Activated CD4-positive, alpha-beta memory T cell treated with anti-CD3 and anti-CD28 coated beads for 36 hours (primary cell): ENCODE measurements at regions of chr1 and their contacts with region 1.

Region 1: DNA sequence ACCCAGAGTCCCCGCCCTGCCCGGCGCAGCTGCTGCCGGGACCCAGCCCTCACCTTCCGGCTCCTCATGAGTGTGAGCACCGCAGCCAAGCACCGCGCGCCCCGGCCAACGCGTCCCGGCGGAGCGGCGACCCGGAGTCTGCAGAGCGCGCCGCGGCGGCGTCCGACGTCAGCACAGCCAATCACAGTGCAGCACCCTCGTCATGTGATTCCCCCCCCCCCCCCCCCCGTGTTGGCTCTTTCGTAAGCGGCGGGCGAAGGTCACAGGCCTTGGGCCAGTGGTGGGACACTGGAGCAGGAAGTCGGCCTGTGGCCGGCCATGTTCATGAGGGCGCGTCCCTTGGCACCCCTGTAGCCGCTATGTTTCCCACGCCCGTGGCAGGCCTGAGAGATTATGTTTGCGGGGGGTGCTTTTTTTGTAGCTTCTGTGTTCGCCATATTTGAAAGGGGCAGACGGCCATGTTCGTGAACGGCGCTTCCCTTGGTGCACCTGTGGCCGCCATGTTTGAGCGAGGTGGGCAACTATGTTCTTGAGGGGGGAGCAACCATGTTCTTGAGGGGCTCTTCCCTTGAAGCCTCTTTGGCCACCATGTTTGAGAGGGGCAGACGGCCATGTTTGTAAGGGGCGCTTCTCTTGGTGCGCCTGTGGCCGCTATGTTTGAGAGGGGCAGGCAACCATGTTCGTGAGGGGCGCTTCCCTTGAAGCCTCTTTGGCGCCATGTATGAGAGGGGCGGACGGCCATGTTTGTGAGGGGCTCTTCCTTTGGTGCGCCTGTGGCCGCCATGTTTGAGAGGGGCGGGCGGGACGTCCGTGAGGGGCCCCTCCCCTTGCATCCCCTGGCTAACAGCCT is at the start of gene C1orf174:
- DNase-seq: peak; percentile 93
- H3K4me3 Mint-ChIP-seq: peak within 1 kb of the TSS; percentile 95
- H3K27ac Mint-ChIP-seq: peak within 1 kb of the TSS; percentile 95
- H3K4me1 Mint-ChIP-seq: peaks cover 47% of the 10 kb centered on the region
- H3K27me3 Mint-ChIP-seq: no peaks in the 10 kb centered on the region
- total RNA-seq, gene C1orf174: 32.8 to 33.5 TPM

Region 2: DNA sequence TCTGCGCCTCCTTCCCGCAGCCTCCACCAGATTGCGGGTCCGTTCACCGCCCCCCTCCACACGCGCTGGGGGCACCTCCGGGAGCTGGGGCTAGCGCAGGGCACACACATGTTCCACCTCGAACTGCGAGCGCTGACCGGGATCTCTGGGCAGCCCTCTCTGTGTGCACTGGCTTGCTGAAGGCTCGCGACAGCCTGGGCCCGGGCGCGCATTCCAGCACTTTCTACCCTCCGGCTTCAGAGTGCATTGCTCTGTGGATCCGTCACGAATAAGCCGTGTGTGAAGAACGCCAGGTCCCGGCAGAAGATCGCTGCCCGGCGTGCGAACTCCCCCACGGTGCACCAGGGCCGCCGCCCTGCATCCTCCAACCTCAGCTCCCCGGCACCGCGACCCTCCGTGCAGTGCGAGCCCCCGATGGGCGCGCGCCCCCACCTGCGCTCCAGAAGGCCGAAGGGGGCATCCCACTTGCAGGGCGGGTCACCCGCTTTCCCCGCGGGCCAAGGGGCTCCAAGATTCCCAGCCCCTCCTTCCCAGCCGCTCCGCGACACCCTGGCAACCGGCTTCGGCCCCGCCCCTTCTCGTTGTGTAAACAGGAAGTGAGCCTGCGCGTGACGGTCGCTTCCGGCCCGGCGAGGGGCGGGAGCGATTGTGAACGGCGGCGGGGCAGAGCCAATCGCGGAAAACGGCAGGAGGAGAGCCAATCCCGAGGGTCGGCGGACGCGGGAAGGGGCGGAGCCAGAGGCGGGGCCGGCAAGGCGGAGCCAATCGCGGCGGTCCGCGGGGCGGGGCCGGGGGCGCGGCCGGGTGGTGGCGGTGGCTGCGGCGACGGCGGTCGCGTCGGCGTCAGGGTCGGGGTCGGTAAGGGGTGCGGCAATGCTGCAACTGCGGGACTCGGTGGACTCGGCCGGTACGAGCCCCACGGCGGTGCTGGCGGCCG is 275.9 kb before region 1 on chr1 and contains the start of gene TPRG1L:
- CTCF ChIA-PET with region 1: no interaction called
- POLR2A ChIA-PET with region 1: no interaction called
- intact Hi-C with region 1: loop called (anchors 1 kb)
- DNase-seq: peak; percentile 98
- H3K4me3 Mint-ChIP-seq: peak within 1 kb of the TSS; percentile 86
- H3K27ac Mint-ChIP-seq: peak within 1 kb of the TSS; percentile 61
- H3K4me1 Mint-ChIP-seq: peaks cover 34% of the 10 kb centered on the region
- H3K27me3 Mint-ChIP-seq: no peaks in the 10 kb centered on the region
- total RNA-seq, gene TPRG1L: 9.2 to 10.4 TPM

Region 3: DNA sequence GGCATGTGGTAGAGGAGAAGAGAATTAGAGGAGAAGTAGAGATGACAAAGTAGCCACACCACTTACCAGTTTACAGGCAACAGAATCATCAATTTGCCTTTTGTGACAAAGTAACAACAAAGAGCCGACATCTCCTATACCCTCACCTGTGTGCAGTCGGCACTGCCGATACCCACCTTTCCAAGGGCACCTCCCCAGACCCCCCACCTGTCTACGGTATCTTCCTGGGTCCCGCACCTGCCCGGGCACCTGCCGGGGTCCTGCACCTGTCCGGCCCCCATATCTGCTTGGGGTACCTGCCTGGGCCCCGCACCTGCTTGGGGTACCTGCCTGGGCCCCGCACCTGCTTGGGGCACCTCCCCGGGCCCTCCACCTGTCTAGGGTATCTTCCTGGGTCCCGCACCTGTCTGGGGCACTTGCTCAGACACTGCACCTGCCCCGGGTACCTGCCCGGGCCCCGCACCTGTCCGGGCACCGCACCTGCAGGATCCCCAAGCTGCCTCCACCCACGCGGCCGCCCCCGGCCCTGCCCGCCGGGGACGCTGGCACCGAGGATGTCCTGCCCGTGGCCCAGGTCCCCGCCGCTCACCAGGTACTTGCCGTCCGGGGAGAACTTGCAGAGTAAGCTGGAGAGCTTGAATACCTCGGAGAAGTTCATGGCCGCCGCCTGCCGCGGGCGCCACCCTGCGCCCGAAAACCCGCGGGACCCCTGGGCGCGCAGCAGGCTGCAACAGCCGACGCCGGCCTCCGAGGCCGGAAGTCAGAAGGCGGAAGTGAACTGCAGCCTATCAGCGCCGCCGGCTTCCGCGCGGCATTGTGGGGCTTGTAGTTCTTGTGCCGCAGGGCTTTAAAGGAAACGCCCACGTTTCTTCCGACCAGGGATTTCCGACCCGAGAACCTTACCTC is 250.7 kb before region 1 on chr1 and contains the start of gene WRAP73:
- CTCF ChIA-PET with region 1: no interaction called
- POLR2A ChIA-PET with region 1: no interaction called
- intact Hi-C with region 1: loop called (anchors 10 kb)
- DNase-seq: peak; percentile 95
- H3K4me3 Mint-ChIP-seq: peak within 1 kb of the TSS; percentile 76
- H3K27ac Mint-ChIP-seq: no peak within 1 kb of the TSS
- H3K4me1 Mint-ChIP-seq: peaks cover 23% of the 10 kb centered on the region
- H3K27me3 Mint-ChIP-seq: peaks cover 25% of the 10 kb centered on the region
- total RNA-seq, gene WRAP73: 34.5 to 34.6 TPM

Region 4: DNA sequence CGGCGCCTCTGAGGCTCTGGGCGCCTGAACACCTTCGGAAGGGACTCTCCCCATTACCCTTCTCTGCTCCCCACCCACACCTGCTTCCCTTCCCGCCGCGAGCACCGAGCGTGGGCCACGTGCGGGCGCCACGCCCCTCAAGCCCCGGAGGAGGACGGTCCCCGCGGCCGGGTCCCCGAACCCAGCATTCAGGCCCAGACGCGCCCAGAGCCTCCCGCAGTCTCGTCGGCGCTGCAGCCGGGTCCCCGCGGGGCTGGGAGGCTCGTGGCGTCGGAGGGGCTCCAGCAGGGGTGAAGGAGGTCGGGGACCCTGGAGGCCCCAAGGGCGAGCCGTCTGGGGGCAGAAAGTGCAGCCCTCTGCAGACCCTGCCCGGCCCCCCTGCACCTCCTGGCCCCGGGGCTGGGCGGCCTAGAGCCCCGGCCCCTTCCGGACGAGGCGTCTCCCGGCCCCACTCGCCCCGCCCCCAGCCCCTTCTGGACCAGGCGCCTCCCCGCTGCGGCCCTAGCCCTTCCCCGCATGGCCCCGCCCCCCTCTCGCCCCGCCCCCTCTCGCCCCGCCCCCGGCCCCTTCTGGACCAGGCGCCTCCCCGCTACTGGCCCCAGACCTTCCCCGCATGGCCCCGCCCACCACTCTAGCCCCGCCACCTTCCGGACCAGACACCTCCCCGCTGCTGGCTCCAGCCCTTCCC is 128.2 kb before region 1 on chr1:
- CTCF ChIA-PET with region 1: interaction called, 8 read pairs
- POLR2A ChIA-PET with region 1: no interaction called
- intact Hi-C with region 1: loop called (anchors 2 kb)
- DNase-seq: peak; percentile 94
- H3K4me3 Mint-ChIP-seq: peak overlapping the region; percentile 57
- H3K27ac Mint-ChIP-seq: no peak overlapping the region
- H3K4me1 Mint-ChIP-seq: peaks cover 5% of the 10 kb centered on the region
- H3K27me3 Mint-ChIP-seq: peaks cover 4% of the 10 kb centered on the region

Region 5: DNA sequence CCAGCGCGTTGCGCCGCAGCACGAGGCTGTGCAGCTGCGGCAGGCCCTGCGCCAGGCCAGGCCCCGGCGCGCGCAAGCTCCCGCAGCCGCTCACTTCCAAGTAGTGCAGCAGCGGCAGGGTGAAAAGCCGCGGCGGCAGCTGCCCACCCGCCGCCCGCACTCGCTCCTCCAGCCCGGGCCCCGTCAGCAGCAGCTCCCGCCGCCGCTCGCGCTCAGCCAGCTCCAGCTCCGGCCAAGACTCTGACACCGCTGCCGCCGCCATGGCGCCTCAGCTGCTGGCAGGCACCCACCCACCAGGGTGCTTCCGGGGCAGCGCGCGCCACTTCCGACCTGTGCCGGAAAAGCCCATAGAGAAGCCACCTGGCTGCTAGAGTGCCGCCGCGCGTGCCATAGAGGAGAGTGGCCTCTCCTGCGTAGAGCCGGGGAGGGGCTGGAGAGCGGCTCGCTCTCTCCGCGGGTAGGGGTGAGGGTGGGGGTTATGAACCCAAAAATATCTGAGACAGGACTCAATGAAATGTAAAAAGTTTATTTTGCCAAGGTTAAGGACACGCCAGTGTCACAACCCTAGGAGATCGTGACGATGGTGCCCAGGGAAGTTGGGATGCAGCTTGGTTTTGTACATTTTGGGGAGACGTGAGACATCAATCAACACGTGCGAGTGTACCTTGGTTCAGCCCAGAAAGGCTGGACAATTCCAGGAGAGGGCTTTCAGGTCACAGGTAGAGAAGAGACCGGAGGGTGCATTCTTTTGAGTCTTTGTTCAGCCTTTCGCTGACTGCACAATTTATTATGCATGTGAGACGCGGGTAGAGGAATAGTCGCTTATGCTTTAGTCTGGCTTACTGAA is 103.9 kb before region 1 on chr1 and contains the start of gene LRRC47:
- CTCF ChIA-PET with region 1: no interaction called
- POLR2A ChIA-PET with region 1: no interaction called
- intact Hi-C with region 1: loop called (anchors 1 kb)
- DNase-seq: peak; percentile 96
- H3K4me3 Mint-ChIP-seq: peak within 1 kb of the TSS; percentile 94
- H3K27ac Mint-ChIP-seq: peak within 1 kb of the TSS; percentile 87
- H3K4me1 Mint-ChIP-seq: peaks cover 47% of the 10 kb centered on the region
- H3K27me3 Mint-ChIP-seq: peaks cover 7% of the 10 kb centered on the region
- total RNA-seq, gene LRRC47: 26.1 to 29.2 TPM

Region 6: GRCh38 chr1:3856908-3857790 is 43.2 kb before region 1 on chr1 and contains the starts of genes CEP104 and DFFB:
- CTCF ChIA-PET with region 1: interaction called, 11 read pairs
- POLR2A ChIA-PET with region 1: interaction called, 5 read pairs
- intact Hi-C with region 1: loop called (anchors 1 kb)
- DNase-seq: peak; percentile 98
- H3K4me3 Mint-ChIP-seq: peak within 1 kb of the TSS; percentile 89
- H3K27ac Mint-ChIP-seq: peak within 1 kb of the TSS; percentile 71
- H3K4me1 Mint-ChIP-seq: peaks cover 27% of the 10 kb centered on the region
- H3K27me3 Mint-ChIP-seq: no peaks in the 10 kb centered on the region
- total RNA-seq, gene CEP104: 29.0 to 32.8 TPM
- total RNA-seq, gene DFFB: 7.5 to 8.3 TPM

Region 7: DNA sequence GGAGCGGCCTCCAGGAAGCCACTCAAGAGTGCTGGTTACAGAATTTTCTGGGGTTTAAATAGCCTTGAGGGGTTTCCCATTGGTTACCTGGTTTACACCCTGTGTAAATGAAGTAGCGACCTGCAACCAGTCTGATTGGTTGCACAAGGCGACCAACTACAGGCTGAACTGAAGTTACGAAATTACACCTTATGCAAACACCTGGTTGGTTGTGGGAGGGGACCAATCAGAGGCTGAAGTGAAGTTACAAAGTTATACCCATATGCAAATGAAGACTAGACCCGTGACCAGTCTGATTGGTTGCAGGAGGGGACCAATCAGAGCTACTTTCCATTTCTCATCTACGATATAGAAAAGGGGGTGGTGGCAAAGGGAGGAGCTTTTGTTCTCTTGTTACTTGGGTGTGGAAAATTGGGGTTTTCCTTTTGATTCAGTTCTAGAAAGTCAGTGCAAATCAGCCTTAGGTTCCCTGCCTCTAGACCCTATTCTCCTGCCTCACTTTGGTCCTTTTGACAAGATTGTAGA is 21.9 kb after region 1 on chr1:
- CTCF ChIA-PET with region 1: interaction called, 3 read pairs
- POLR2A ChIA-PET with region 1: no interaction called
- intact Hi-C with region 1: loop called (anchors 1 kb)
- DNase-seq: peak; percentile 36
- H3K4me3 Mint-ChIP-seq: no peak overlapping the region
- H3K27ac Mint-ChIP-seq: peak overlapping the region; percentile 1
- H3K4me1 Mint-ChIP-seq: peaks cover 7% of the 10 kb centered on the region
- H3K27me3 Mint-ChIP-seq: peaks cover 11% of the 10 kb centered on the region